AG04450 (cell line): ENCODE measurements at regions of chr1 and their contacts with region 1.

Region 1: DNA sequence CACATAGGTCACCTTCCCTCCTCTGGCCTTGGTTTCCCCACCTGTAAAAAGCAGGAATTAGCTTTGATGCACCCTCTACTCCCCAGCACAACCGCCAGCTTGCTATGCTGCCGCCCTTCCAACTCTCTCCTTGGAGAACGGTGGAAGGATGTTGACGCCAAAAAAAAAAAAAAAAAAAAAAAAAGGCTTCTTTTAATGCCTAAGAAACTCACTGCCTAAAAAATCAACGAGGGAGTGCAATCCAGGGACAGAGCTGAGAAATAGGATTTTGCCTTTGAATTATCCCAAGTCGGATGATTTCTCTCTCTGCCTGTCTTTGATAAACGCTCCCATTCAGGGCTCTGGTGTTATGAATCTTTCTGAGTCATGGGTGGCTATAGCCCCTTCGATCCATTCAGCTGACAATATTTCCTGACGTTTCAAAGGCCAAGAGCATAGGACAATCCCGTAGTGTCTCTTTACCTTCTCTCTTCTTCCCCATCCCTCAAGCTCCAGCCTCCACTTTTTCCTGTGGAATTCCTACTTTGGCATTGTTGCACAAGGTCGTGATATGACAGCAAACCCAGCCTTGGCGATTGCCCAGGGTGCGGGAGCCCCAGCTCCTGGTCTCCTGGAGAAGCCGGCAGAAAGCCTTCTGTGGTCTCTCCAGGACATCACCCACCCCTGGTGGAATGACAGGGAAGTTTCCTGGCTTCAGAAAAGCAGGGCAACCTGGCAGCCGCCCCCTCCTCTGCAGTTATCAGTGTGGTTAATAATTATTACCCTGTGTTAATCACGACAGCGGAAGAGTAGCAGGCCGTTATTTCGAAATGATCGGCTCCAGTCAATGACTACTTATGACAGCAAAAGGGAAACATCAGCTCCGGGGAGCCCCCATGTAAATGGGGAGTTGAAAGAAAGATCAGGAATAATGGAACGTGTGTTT is 8.0 kb upstream of the PLXNA2 start:
- DNase-seq: no peak
- H3K4me3 ChIP-seq: no peak overlapping the region
- H3K27ac ChIP-seq: no peak overlapping the region
- H3K27me3 ChIP-seq: peaks cover 18% of the 10 kb centered on the region
- CTCF ChIP-seq: peak; percentile 47

Region 2: DNA sequence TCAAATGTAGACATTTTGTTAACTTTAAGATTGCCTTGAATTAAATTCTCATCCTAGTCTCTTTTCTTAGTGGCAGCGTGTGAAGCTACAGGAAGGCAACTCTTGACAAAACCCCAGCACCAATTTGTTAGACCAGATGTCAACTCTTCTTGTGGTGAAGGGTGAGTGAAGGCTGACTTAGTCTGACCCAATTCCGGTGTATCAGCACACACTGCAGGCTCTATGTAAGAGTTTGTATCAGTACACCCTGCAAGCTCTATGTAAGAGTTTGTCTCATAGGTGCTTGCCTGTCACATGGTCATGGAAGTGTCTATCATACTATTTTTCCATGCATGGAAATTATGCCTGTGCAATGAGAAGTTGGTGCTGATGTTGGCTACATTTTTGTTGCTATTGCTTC is 781.2 kb before region 1 on chr1:
- CTCF ChIA-PET with region 1: interaction called, 10 read pairs
- POLR2A ChIA-PET with region 1: no interaction called
- DNase-seq: no peak
- H3K4me3 ChIP-seq: no peak overlapping the region
- H3K27ac ChIP-seq: no peak overlapping the region
- H3K27me3 ChIP-seq: no peaks in the 10 kb centered on the region
- CTCF ChIP-seq: no peak

Region 3: DNA sequence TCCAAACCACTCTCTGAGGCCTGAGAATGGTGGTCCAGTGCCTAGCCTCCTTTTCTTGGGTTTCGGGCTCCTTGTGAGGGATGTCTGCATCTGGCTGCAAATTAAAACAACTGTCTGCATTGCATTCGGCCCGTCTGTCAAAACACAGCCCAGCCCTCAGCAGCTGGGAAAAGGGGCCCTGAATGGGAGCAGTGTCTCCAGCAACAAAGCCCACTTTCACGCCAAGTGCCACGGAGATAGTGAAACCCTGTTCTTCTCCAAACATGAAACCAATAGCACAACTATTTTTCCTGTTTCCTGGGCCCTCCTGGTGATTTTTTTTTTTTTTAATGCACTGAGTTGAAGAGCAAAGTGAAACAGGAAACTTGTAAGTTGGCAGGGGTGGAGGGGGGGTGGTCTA is 146.4 kb before region 1 on chr1:
- CTCF ChIA-PET with region 1: no interaction called
- POLR2A ChIA-PET with region 1: no interaction called
- DNase-seq: no peak
- H3K4me3 ChIP-seq: no peak overlapping the region
- H3K27ac ChIP-seq: no peak overlapping the region
- H3K27me3 ChIP-seq: no peaks in the 10 kb centered on the region
- CTCF ChIP-seq: no peak

Region 4: DNA sequence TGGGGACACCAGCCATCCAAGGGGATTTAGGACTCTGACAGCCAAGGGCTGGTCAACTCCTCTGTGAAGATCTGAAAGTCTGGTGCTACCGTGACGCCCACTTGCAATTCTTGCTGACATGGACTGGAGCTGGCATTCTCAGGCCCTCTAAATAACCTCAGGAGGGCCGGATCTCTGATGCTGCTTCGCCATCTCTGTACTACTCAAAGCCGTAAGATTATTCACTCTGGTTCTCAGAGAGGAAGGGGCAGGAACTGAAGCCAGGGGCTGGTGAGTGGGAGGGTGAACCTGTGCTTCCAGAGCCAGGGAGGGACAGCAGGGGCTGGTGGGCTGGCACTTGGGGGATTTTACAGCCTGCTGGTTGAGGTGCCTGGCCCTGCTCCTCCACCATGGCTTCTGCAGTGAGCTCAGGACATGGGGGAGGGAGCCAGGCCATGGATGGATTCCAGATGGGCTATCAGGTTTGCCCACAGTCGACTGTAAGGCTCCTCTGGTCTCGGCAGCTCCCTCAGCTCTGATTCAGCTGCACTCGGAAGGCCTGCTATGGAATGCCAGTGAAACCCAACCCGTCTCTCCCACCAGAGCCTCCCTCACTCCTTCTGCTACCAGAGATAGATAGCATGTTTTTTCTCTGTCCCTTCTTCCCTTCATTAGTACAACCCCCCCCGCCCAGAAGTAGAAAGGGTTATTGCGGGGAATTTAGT is 92.5 kb before region 1 on chr1:
- CTCF ChIA-PET with region 1: no interaction called
- POLR2A ChIA-PET with region 1: no interaction called
- DNase-seq: peak; percentile 60
- H3K4me3 ChIP-seq: no peak overlapping the region
- H3K27ac ChIP-seq: peak overlapping the region; percentile 39
- H3K27me3 ChIP-seq: no peaks in the 10 kb centered on the region
- CTCF ChIP-seq: no peak

Region 5: DNA sequence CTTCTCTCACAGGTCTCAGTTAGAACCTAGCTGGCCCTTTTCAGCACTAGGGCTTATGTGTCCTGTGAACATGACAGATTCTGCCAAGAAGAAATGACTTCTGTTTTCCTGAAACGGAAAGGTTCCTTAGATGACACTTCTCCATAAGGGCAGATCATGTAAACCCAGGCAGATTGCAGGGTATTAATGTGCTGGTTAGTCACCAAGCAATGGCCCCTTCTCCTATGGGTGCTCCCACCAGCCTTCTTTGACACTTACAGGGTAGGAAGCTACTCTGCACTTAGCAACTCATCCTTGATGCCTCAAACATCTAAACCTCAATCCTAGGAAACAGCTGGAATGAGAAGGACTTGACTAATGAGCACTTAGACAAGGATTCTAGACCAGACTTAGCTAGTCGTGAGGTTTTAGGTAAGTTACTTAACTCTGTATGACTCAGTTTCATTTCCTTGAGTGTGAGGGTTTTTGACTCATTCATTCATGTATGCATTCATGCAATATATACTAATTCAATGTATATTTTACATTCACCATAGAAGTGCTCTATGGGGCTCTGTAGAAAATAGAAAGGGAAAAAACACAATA is 66.1 kb after region 1 on chr1:
- CTCF ChIA-PET with region 1: no interaction called
- POLR2A ChIA-PET with region 1: interaction called, 16 read pairs
- DNase-seq: no peak
- H3K4me3 ChIP-seq: no peak overlapping the region
- H3K27ac ChIP-seq: no peak overlapping the region
- H3K27me3 ChIP-seq: no peaks in the 10 kb centered on the region
- CTCF ChIP-seq: no peak